CD8-positive, alpha-beta T cell (primary cell): ENCODE measurements at regions of chr3 and their contacts with region 1.

Region 1: DNA sequence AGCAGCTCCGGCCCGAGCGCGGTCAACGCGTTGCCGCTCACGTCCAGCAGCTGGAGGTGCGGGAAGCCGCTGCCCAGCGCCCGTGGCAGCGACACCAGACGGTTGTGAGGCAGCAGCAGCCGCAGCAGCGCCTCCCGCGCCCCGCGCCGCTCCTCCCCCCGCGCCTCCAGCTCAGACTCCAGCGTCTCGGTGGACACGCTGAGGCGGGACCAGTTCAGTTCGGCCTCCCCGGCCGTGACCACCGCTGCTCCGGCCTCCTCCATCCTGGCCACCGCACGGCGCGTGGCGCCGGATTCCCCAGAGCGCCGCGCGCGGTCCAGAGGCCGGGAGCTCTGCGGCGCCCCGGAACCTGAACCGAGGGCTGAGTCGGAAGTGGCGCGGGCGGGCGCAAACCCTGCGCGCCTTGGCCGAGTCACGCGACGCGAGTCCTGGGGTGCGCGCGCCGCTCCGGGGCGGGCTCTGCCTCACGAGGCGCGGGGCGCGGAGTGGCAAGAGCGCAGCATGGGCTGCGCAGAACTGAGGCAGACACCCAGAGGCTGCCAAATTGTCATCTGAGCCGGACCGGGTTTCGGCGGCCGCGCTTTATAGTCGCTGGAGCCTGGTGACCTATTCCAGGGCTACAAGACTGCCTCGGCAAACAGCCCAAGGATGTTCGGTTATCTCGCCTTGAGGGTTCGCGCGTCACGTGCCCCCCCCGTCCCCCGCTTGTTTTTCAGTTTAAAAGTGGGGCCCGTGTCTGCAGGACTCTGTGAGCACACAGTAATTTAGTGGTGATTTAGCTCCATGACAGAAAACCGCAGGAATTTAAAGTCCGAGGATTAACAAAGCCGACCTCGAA is at the start of gene LRRC58:
- DNase-seq: peak; percentile 77 to 95 (median 88)
- ATAC-seq: peak; percentile 90
- H3K4me3 ChIP-seq: peak within 1 kb of the TSS; percentile 71 to 83
- H3K4me3 Mint-ChIP-seq: peak within 1 kb of the TSS; percentile 89
- H3K27ac ChIP-seq: peak within 1 kb of the TSS; percentile 71 to 75
- H3K27ac Mint-ChIP-seq: peak within 1 kb of the TSS; percentile 94
- H3K4me1 ChIP-seq: peaks cover 44% of the 10 kb centered on the region
- H3K4me1 Mint-ChIP-seq: peaks cover 46% of the 10 kb centered on the region
- H3K27me3 ChIP-seq: no peaks in the 10 kb centered on the region
- H3K27me3 Mint-ChIP-seq: peaks cover 6% of the 10 kb centered on the region
- CTCF ChIP-seq: peak; percentile 35
- total RNA-seq, gene LRRC58: 16.1 to 17.0 TPM

Region 2: DNA sequence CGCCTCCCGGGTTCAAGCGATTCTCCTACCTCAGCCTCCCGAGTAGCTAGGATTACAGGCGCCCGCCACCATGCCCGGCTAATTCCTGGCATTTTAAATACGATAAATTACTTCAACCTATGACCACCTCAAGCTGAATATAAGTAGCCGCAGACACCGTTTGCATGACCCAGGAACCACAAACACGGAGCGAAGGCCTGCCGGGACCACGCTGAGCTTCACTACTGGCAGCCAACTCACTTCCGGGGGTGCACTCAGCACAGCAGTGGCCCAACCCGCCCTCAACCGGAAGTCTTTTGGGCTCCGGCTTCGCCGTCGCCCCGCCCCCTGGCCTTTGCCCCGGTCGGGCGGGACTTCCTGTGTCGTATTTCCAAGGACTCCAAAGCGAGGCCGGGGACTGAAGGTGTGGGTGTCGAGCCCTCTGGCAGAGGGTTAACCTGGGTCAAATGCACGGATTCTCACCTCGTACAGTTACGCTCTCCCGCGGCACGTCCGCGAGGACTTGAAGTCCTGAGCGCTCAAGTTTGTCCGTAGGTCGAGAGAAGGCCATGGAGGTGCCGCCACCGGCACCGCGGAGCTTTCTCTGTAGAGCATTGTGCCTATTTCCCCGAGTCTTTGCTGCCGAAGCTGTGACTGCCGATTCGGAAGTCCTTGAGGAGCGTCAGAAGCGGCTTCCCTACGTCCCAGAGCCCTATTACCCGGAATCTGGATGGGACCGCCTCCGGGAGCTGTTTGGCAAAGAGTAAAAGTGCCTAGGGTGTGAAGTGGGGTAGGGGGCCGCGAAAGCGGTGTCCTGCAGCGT is 850.8 kb before region 1 on chr3 and contains the start of gene TIMMDC1:
- CTCF ChIA-PET with region 1: no interaction called
- POLR2A ChIA-PET with region 1: no interaction called
- intact Hi-C with region 1: loop called (anchors 1 to 2 kb)
- DNase-seq: peak; percentile 93 to 99 (median 98)
- ATAC-seq: peak; percentile 96
- H3K4me3 ChIP-seq: peak within 1 kb of the TSS; percentile 81 to 87
- H3K4me3 Mint-ChIP-seq: peak within 1 kb of the TSS; percentile 100
- H3K27ac ChIP-seq: peak within 1 kb of the TSS; percentile 92 to 95
- H3K27ac Mint-ChIP-seq: peak within 1 kb of the TSS; percentile 100
- H3K4me1 ChIP-seq: peaks cover 25% of the 10 kb centered on the region
- H3K4me1 Mint-ChIP-seq: peaks cover 40% of the 10 kb centered on the region
- H3K27me3 ChIP-seq: no peaks in the 10 kb centered on the region
- H3K27me3 Mint-ChIP-seq: no peaks in the 10 kb centered on the region
- CTCF ChIP-seq: no peak
- total RNA-seq, gene TIMMDC1: 12.1 to 16.8 TPM

Region 3: GRCh38 chr3:119891944-119892721 is 457.1 kb before region 1 on chr3:
- CTCF ChIA-PET with region 1: interaction called, 3 read pairs
- POLR2A ChIA-PET with region 1: no interaction called
- intact Hi-C with region 1: loop called in 1 of 2 experiments (anchors 10 kb)
- DNase-seq: peak in 8 of 9 experiments; percentile 10 to 76 (median 42)
- ATAC-seq: peak; percentile 68
- H3K4me3 ChIP-seq: no peak overlapping the region
- H3K4me3 Mint-ChIP-seq: no peak overlapping the region
- H3K27ac ChIP-seq: no peak overlapping the region
- H3K27ac Mint-ChIP-seq: no peak overlapping the region
- H3K4me1 ChIP-seq: peaks cover 3% of the 10 kb centered on the region
- H3K4me1 Mint-ChIP-seq: peaks cover 11% of the 10 kb centered on the region
- H3K27me3 ChIP-seq: no peaks in the 10 kb centered on the region
- H3K27me3 Mint-ChIP-seq: no peaks in the 10 kb centered on the region
- CTCF ChIP-seq: peak; percentile 85

Region 4: DNA sequence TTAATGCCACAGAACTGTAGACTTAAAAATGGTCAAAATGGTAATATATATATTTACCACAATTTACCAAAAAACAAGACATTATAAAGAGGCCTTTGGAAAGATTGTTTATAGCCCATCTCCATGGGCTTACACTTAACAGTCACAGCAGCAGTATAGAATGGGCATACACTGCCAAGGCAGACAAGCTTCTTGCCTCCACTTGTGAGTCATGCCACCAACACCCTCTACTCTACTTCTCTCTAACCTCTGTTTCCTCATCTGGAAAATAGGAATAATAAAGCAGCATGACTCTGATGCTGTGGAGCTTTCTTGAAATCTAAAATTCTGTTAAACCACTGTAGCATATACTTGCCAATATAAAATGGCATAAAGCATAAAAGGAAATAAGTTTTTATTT is 49.8 kb before region 1 on chr3:
- CTCF ChIA-PET with region 1: no interaction called
- POLR2A ChIA-PET with region 1: no interaction called
- intact Hi-C with region 1: no loop called
- DNase-seq: no peak
- ATAC-seq: no peak
- H3K4me3 ChIP-seq: no peak overlapping the region
- H3K4me3 Mint-ChIP-seq: no peak overlapping the region
- H3K27ac ChIP-seq: no peak overlapping the region
- H3K27ac Mint-ChIP-seq: no peak overlapping the region
- H3K4me1 ChIP-seq: no peaks in the 10 kb centered on the region
- H3K4me1 Mint-ChIP-seq: no peaks in the 10 kb centered on the region
- H3K27me3 ChIP-seq: no peaks in the 10 kb centered on the region
- H3K27me3 Mint-ChIP-seq: peaks cover 4% of the 10 kb centered on the region
- CTCF ChIP-seq: no peak

Region 5: GRCh38 chr3:120399372-120399771 is 50.2 kb after region 1 on chr3:
- CTCF ChIA-PET with region 1: no interaction called
- POLR2A ChIA-PET with region 1: no interaction called
- intact Hi-C with region 1: no loop called
- DNase-seq: no peak
- ATAC-seq: no peak
- H3K4me3 ChIP-seq: no peak overlapping the region
- H3K4me3 Mint-ChIP-seq: no peak overlapping the region
- H3K27ac ChIP-seq: no peak overlapping the region
- H3K27ac Mint-ChIP-seq: no peak overlapping the region
- H3K4me1 ChIP-seq: no peaks in the 10 kb centered on the region
- H3K4me1 Mint-ChIP-seq: no peaks in the 10 kb centered on the region
- H3K27me3 ChIP-seq: no peaks in the 10 kb centered on the region
- H3K27me3 Mint-ChIP-seq: no peaks in the 10 kb centered on the region
- CTCF ChIP-seq: no peak

Region 6: DNA sequence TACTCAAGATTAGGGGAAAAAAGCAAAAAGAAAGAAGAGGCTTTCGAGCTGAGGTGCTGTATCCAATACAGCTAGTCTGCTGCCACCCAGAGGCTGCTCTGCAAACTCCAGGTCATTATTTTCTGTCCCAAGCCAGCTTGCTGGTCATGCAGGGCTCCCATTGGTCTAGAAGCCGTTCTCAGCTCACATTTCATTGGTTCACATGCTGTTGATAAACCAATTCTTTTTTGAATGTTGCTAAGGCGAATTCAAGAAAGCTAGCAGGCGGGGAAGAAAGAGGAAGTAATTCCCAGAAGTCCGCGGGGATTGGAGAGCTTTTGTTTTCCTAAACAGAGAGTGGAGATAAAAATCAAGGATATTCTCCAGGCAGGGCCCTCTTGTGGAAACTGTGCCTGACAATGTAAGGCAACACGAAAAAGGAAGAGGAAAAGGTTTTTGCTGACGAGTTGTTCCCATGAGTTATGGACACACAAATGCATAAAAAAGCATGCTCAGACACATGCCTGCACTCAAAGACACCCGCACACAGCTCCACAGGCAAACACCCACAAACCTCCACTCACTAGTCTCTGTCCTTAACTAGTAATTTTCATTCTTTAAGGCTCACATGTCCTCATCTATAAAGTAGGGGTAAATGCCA is 68.2 kb after region 1 on chr3:
- CTCF ChIA-PET with region 1: interaction called, 7 read pairs
- POLR2A ChIA-PET with region 1: interaction called, 15 read pairs
- intact Hi-C with region 1: loop called in 1 of 2 experiments (anchors 2 kb)
- DNase-seq: peak; percentile 66 to 90 (median 80)
- ATAC-seq: peak; percentile 99
- H3K4me3 ChIP-seq: peak overlapping the region; percentile 47 to 55
- H3K4me3 Mint-ChIP-seq: peak overlapping the region; percentile 84
- H3K27ac ChIP-seq: no peak overlapping the region
- H3K27ac Mint-ChIP-seq: no peak overlapping the region
- H3K4me1 ChIP-seq: no peaks in the 10 kb centered on the region
- H3K4me1 Mint-ChIP-seq: peaks cover 21% of the 10 kb centered on the region
- H3K27me3 ChIP-seq: no peaks in the 10 kb centered on the region
- H3K27me3 Mint-ChIP-seq: peaks cover 4% of the 10 kb centered on the region
- CTCF ChIP-seq: peak; percentile 87

Region 7: GRCh38 chr3:120596116-120596852 is 247.1 kb after region 1 on chr3 and contains the start of gene NDUFB4:
- CTCF ChIA-PET with region 1: no interaction called
- POLR2A ChIA-PET with region 1: no interaction called
- intact Hi-C with region 1: loop called (anchors 1 to 5 kb)
- DNase-seq: peak; percentile 87 to 99 (median 95)
- ATAC-seq: peak; percentile 92
- H3K4me3 ChIP-seq: peak within 1 kb of the TSS; percentile 77 to 92
- H3K4me3 Mint-ChIP-seq: peak within 1 kb of the TSS; percentile 94
- H3K27ac ChIP-seq: peak within 1 kb of the TSS; percentile 91 to 95
- H3K27ac Mint-ChIP-seq: peak within 1 kb of the TSS; percentile 97
- H3K4me1 ChIP-seq: peaks cover 34% of the 10 kb centered on the region
- H3K4me1 Mint-ChIP-seq: peaks cover 12% of the 10 kb centered on the region
- H3K27me3 ChIP-seq: no peaks in the 10 kb centered on the region
- H3K27me3 Mint-ChIP-seq: no peaks in the 10 kb centered on the region
- CTCF ChIP-seq: no peak
- total RNA-seq, gene NDUFB4: 63.2 to 71.5 TPM

Region 8: GRCh38 chr3:121654493-121655385 is 1305.5 kb after region 1 on chr3:
- CTCF ChIA-PET with region 1: no interaction called
- POLR2A ChIA-PET with region 1: no interaction called
- intact Hi-C with region 1: loop called in 1 of 2 experiments (anchors 10 kb)
- DNase-seq: peak in 2 of 9 experiments; percentile 20 to 51
- ATAC-seq: peak; percentile 81
- H3K4me3 ChIP-seq: peak overlapping the region in 1 of 2 experiments; percentile 7
- H3K4me3 Mint-ChIP-seq: peak overlapping the region; percentile 61
- H3K27ac ChIP-seq: peak overlapping the region; percentile 8 to 70
- H3K27ac Mint-ChIP-seq: peak overlapping the region; percentile 91
- H3K4me1 ChIP-seq: peaks cover 76% of the 10 kb centered on the region
- H3K4me1 Mint-ChIP-seq: peaks cover 86% of the 10 kb centered on the region
- H3K27me3 ChIP-seq: no peaks in the 10 kb centered on the region
- H3K27me3 Mint-ChIP-seq: no peaks in the 10 kb centered on the region
- CTCF ChIP-seq: no peak

Region 9: DNA sequence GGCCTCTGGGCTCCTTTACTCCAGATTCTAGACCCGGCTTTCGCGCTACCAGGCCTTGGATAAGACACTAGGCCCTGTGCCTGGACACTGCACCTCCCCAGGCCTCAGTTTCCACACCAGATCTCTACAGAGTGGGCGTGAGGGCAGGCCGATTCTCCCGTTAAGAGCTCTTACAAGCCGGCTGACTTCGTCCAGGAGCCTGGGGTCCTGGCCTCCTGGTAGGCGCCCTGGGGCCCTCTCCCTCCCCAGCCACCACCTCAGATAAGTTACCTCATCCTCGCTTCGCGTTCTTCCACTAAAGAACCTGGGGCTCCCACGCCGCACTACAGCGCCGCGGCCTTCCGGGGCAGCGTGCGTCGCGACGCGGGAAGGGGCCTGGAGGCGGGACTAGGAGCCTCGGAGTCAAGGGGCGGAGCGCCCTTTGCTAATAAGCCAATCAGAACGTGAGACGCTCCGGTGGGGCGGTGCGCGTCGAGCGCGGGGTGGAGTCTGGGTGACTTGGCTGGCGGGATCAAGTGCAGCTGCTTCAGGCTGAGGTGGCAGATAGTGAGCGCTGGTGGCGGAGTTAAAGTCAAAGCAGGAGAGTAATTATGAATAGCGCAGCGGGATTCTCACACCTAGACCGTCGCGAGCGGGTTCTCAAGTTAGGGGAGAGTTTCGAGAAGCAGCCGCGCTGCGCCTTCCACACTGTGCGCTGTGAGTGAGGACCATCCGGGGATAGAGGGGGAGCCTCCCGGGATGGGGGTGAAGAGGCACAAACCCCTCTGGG is 1485.7 kb after region 1 on chr3 and contains the starts of genes EAF2 and IQCB1:
- CTCF ChIA-PET with region 1: no interaction called
- POLR2A ChIA-PET with region 1: no interaction called
- intact Hi-C with region 1: loop called in 1 of 2 experiments (anchors 10 kb)
- DNase-seq: peak; percentile 91 to 98 (median 95)
- ATAC-seq: peak; percentile 97
- H3K4me3 ChIP-seq: peak within 1 kb of the TSS; percentile 74 to 91
- H3K4me3 Mint-ChIP-seq: peak within 1 kb of the TSS; percentile 93
- H3K27ac ChIP-seq: peak within 1 kb of the TSS; percentile 82 to 87
- H3K27ac Mint-ChIP-seq: peak within 1 kb of the TSS; percentile 94
- H3K4me1 ChIP-seq: peaks cover 25% of the 10 kb centered on the region
- H3K4me1 Mint-ChIP-seq: peaks cover 53% of the 10 kb centered on the region
- H3K27me3 ChIP-seq: no peaks in the 10 kb centered on the region
- H3K27me3 Mint-ChIP-seq: no peaks in the 10 kb centered on the region
- CTCF ChIP-seq: no peak
- total RNA-seq, gene EAF2: 3.5 to 3.7 TPM
- total RNA-seq, gene IQCB1: 36.5 to 42.2 TPM